ENCODE measurements at regions of chr11 and their contacts with region 1.

Region 1: GRCh38 chr11:120303004-120303637 is 22.0 kb upstream of the TLCD5 start:
- DNase-seq: peak; percentile 67
- ATAC-seq: peak; percentile 84

Region 2: GRCh38 chr11:120210626-120211521 is 92.2 kb before region 1 on chr11 and contains the start of gene OAF:
- intact Hi-C with region 1: no loop called
- DNase-seq: peak; percentile 90
- ATAC-seq: peak; percentile 86
- total RNA-seq, gene OAF: 27.9 TPM

Region 3: GRCh38 chr11:120229451-120230424 is 73.4 kb before region 1 on chr11:
- intact Hi-C with region 1: loop called (anchors 5 kb)
- DNase-seq: peak; percentile 23
- ATAC-seq: no peak